Transverse colon (tissue), 4 donors: ENCODE measurements at regions of chr14 and their contacts with region 1.

Region 1: DNA sequence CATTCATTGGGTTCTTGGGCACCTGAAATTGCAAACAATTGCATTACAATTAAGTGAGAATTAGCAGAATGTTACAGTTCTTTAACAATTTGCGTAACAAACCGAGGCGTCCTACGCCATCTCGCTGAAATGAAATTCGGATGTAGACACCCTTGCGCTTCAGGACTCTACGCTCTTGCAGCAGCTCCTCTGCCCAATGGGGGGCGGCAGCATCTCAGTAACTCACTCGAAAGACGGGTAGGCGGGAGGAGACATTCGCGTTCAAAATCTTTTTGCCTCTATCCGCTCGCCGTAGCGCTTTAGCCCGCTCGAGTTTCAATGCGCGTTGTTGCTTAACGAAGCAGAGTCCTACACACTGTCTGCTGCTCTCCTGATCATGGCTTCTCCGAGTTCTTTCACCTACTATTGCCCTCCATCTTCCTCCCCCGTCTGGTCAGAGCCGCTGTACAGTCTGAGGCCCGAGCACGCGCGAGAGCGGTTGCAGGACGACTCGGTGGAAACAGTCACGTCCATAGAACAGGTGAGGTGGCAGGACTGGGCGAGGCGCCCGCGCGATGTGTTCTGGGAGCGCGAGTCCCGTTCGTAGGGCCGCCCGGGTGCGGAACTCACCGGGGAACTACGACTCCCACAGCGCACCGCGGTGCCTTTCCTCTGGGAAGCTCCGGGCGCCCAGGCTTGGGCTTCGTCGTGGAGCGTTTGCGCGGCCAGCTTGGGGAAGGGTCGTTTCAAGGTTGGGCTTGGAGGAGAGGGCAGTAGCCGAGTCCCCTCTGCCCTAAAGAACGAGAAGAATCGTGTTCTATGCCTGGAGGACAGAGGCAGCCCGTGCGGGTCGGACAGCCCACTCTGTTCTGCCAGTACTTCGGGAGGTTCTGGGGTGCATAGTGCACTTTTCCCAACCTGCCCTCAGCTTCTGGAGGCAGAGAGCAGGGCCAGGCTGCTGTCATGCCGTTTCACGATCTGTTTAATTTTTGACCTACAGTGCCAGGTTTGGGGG is at the start of gene FNTB:
- DNase-seq: peak; percentile 96
- H3K4me3 ChIP-seq: peak within 1 kb of the TSS; percentile 48 to 83 (median 71)
- H3K27ac ChIP-seq: peak within 1 kb of the TSS; percentile 90 to 96 (median 91)
- H3K4me1 ChIP-seq: peaks cover 0 to 25% (median 16%) of the 10 kb centered on the region in 4 donors
- H3K27me3 ChIP-seq: no peaks in the 10 kb centered on the region
- CTCF ChIP-seq: peak; percentile 69 to 85 (median 79)
- EP300 ChIP-seq: no peak
- POLR2A ChIP-seq: peak; percentile 75
- total RNA-seq, gene FNTB: 6.5 to 77.2 (median 12.7) TPM

Region 2: GRCh38 chr14:64800000-64800399 is 186.9 kb before region 1 on chr14:
- in situ Hi-C with region 1: no loop called
- intact Hi-C with region 1: no loop called
- DNase-seq: peak; percentile 23
- H3K4me3 ChIP-seq: no peak overlapping the region
- H3K27ac ChIP-seq: no peak overlapping the region
- H3K4me1 ChIP-seq: no peaks in the 10 kb centered on the region
- H3K27me3 ChIP-seq: no peaks in the 10 kb centered on the region
- CTCF ChIP-seq: peak; percentile 21 to 50 (median 41)
- EP300 ChIP-seq: no peak
- POLR2A ChIP-seq: no peak

Region 3: DNA sequence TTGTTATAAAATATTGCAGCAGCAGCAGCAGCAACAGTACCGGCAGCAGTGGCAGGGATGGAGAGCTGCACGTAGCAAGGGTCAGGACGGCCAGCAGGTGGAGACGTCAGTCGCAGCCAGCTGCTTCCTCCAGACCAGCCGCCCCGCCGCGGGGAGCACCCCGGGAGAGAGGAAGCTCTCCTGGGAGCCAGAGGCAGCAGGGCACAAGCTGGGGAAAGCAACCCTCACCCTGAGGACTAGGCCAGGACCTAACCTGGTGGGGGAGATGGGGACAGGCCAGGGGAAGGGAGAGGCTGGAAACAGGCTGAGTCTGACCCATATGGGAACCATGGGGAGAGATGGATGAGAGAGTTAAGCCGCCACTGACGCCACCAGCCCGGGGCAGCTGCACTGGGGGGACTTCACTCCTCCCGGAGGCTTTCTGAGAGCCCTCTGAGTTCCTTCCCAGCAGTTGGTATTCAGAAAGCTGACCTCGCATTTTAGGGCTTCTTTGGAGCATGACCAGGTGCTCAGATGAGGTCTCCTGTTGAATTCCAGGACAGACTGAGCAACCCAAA is 163.5 kb before region 1 on chr14:
- in situ Hi-C with region 1: loop called in 2 of 4 experiments (anchors 10 kb)
- intact Hi-C with region 1: loop called (anchors 2 kb)
- DNase-seq: peak; percentile 78
- H3K4me3 ChIP-seq: no peak overlapping the region
- H3K27ac ChIP-seq: no peak overlapping the region
- H3K4me1 ChIP-seq: peaks cover 3 to 4% (median 4%) of the 10 kb centered on the region in 4 donors
- H3K27me3 ChIP-seq: no peaks in the 10 kb centered on the region
- CTCF ChIP-seq: peak; percentile 75 to 85 (median 83)
- EP300 ChIP-seq: no peak
- POLR2A ChIP-seq: no peak

Region 4: DNA sequence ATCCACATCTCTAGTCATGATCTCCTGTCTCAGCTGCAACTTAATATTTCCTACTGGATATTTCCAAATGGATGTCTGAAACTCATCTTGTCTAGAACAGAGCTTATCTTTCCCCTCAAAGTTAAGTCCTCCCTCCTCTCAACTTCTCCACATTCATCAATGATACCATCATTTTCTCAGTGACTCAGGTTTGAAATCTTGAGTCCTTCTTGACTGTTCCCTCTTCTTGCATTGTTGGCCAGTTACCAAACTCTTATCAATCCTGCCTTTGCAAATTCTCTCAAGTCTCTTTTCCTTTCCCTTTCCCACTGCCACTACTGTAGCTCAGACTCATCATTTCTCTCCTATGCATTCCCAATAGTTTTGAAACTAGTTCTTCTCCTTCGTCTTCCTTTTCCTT is 86.9 kb before region 1 on chr14:
- in situ Hi-C with region 1: no loop called
- intact Hi-C with region 1: no loop called
- DNase-seq: no peak
- H3K4me3 ChIP-seq: no peak overlapping the region
- H3K27ac ChIP-seq: no peak overlapping the region
- H3K4me1 ChIP-seq: no peaks in the 10 kb centered on the region
- H3K27me3 ChIP-seq: no peaks in the 10 kb centered on the region
- CTCF ChIP-seq: no peak
- EP300 ChIP-seq: no peak
- POLR2A ChIP-seq: no peak

Region 5: DNA sequence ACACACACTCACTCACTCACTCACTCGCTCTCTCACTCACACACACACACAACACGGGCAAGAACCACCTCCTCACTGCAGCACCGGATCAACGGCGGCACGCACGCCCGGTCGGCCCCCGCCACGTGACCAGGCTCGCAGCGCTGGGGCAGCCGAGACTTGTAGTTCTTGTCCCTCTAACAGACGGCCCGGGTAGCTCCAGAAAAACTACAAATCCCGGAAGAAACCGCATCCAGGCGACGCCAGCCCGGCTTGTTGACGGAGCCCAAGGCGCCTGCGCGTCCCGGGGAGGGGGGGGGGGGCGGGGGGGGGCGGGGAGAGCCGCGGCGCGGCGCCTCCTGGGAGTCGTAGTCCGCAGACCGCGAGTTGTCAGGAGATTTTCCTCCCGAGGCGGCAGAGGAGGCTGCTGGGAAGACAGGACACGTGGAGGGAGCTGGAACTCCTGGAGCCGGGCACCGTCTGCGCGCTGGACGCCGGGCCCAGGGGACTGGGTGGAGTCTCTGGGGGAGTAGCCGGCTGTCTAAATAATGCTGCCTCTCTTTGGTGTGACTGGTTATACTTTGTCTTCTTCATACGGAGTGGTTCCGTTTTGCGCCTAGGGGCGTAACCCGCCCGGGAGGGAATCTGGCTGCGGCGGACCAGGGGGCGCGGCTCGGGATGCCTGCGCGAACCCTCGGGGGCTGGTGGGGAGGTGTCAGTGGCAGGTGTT is 115.7 kb after region 1 on chr14 and contains the start of gene MAX:
- in situ Hi-C with region 1: no loop called
- intact Hi-C with region 1: loop called (anchors 5 kb)
- DNase-seq: peak; percentile 98
- H3K4me3 ChIP-seq: peak within 1 kb of the TSS; percentile 86 to 96 (median 92)
- H3K27ac ChIP-seq: peak within 1 kb of the TSS; percentile 94
- H3K4me1 ChIP-seq: peaks cover 16 to 53% (median 32%) of the 10 kb centered on the region in 4 donors
- H3K27me3 ChIP-seq: no peaks in the 10 kb centered on the region
- CTCF ChIP-seq: no peak
- EP300 ChIP-seq: no peak
- POLR2A ChIP-seq: peak; percentile 95
- total RNA-seq, gene MAX: 35.8 to 139 (median 87.0) TPM

Region 6: GRCh38 chr14:65377590-65377989 is 390.7 kb after region 1 on chr14:
- in situ Hi-C with region 1: loop called in 1 of 4 experiments (anchors 25 kb)
- intact Hi-C with region 1: no loop called
- DNase-seq: no peak
- H3K4me3 ChIP-seq: no peak overlapping the region
- H3K27ac ChIP-seq: no peak overlapping the region
- H3K4me1 ChIP-seq: peaks cover 0 to 3% (median 0%) of the 10 kb centered on the region in 4 donors
- H3K27me3 ChIP-seq: no peaks in the 10 kb centered on the region
- CTCF ChIP-seq: no peak
- EP300 ChIP-seq: no peak
- POLR2A ChIP-seq: no peak